Cardiac septum (tissue), 1 donor: ENCODE measurements at regions of chr5 and their contacts with region 1.

Region 1: DNA sequence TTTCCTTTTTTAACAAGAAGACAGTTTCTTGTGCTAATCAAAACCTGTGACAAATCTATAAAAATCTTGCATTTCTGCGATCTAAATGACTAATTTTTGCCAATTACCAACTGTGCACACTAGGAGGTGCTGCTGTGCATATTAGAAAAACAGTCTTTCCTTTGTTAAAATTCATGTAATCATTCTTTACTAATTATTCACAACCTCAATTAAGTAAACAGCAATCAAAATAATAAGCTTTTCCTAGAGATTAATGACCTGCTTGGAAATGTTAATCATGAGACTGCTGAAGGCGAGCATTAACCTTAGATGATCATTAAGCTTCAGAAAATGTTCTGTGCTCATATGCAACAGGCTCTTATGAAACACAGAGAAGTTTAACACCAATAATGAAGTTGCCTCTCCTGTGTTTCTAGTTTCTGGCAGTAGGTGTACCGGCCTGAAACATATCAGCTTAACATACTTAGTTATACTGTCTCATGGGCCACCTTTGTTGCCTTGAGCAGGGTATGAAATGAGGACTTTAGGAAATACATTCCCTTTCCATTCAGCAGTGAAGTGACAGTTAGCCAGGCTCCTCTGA is 17.7 kb downstream of the RFESD start:
- DNase-seq: no peak

Region 2: DNA sequence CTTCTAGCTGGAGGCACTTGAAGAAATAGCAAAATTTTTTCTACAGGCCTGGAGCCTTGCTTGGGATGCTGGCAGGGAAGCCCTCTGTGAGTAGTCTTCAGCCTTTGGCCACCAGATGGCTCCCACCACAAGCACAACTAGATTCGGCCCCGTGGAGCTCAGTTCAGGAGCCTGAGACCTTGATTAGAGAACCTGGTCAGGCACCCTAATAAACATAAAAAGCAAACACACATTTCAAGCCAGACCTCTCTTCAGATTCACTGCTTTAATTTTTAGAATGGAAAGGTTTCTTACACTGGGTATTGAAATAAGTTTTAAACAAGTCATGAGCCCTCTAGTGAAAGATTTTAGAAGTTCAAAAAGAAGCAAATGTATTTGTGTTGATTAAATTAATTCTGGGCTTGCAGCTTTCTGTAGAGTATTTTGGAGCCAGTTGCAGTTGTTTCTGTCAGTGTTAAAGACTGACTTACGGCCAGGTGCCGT is 116.8 kb after region 1 on chr5:
- intact Hi-C with region 1: loop called (anchors 1 kb)
- DNase-seq: peak; percentile 91